ENCODE measurements at regions of chr10 and their contacts with region 1.

Region 1: DNA sequence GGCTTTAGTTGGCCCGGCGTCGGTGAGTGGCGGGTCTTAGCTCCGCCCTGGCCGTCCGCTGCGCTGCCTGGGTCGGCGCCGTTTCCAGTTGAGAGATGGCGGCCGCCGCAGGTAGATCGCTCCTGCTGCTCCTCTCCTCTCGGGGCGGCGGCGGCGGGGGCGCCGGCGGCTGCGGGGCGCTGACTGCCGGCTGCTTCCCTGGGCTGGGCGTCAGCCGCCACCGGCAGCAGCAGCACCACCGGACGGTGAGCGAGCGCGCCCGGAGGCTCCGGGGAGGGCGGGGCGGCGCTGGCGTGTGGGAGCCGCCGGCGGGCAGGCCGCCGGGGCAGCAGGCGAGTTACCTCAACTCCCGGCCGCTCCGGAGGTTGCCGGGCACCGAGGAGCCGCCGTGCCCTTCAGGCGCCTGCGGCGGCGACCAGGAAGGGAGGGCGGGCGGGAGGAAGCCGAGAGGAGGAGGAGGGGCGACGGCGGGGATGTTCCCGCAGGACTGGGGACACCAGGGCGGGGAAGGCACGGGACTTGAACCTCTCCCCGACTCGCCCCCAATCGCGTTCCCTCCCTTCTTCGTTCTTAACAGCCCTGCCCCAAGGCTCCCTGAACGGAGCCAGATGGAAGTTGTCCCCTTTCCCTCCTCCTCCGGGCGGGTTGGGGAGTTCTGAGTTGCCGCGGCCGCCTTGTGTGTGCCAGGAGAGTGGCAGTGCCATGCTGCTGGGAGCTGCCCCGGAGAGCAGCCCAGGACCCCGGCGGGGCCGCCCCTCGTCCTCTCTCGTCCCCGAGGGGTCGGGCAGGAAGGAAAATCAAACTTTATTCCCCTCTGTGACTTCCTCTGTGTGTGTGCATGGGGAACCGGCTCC is at the start of gene MCU:
- DNase-seq: peak; percentile 94
- ATAC-seq: peak; percentile 99
- H3K4me3 Mint-ChIP-seq: peak within 1 kb of the TSS; percentile 80
- H3K27ac Mint-ChIP-seq: peak within 1 kb of the TSS; percentile 79
- H3K4me1 Mint-ChIP-seq: peaks cover 28% of the 10 kb centered on the region
- H3K27me3 Mint-ChIP-seq: peaks cover 16% of the 10 kb centered on the region
- total RNA-seq, gene MCU: 11.3 to 11.6 TPM

Region 2: DNA sequence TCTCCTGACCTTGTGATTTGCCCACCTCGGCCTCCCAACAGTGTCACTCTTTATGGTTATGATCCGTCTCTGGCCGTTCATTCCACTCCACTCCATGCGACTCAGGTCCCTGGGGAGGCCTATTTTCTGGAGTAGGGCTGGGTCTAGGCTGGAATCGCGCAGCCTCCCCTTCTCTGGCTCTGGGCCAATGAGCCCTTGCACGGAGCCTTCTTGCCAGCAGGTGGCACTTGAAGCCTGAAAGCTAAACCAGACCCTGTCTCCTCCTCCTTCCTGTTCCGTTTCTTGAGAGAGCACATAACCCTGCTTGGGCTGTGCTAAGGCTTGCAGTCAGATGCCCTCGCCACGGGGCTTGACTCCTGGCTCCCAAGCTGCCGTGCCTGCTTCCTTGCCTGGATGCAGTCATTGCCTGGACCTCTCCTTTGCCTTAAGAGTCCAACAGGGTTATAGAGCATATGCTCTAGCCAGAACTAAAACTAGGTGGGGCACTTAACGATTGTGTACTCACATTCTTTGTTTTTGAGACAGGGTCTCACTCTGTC is 328.0 kb before region 1 on chr10:
- CTCF ChIA-PET with region 1: interaction called, 10 read pairs
- POLR2A ChIA-PET with region 1: no interaction called
- DNase-seq: peak; percentile 92
- ATAC-seq: peak; percentile 100
- H3K4me3 Mint-ChIP-seq: no peak overlapping the region
- H3K27ac Mint-ChIP-seq: peak overlapping the region; percentile 73
- H3K4me1 Mint-ChIP-seq: peaks cover 21% of the 10 kb centered on the region
- H3K27me3 Mint-ChIP-seq: peaks cover 9% of the 10 kb centered on the region

Region 3: DNA sequence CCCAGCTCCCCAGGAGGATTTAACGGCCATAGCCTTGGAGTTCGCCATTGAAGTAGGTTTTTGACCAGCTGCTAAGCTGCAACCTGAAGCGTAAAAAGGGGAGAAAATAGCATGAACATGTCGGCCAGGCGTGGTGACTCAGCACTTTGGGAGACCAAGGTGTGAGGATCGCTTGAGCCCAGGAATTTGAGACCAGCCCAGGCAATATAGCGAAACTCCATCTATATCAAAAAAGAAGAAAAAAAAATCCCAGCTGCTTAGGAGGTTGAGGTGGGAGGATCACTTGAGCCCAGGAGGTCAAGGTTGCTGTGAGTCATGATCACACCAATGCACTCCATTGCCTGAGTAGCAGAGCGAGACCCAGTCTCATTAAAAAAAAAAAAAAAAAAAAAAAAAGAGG is 32.6 kb before region 1 on chr10:
- CTCF ChIA-PET with region 1: no interaction called
- POLR2A ChIA-PET with region 1: no interaction called
- DNase-seq: no peak
- ATAC-seq: no peak
- H3K4me3 Mint-ChIP-seq: no peak overlapping the region
- H3K27ac Mint-ChIP-seq: no peak overlapping the region
- H3K4me1 Mint-ChIP-seq: no peaks in the 10 kb centered on the region
- H3K27me3 Mint-ChIP-seq: peaks cover 2% of the 10 kb centered on the region